ENCODE measurements at regions of chr1 and their contacts with region 1.

Region 1: GRCh38 chr1:222792744-222793143 is 22.1 kb upstream of the DISP1 start:
- DNase-seq: no peak
- ATAC-seq: peak in 2 of 4 donors; percentile 51 to 72
- H3K4me3 ChIP-seq: no peak overlapping the region
- H3K27ac ChIP-seq: no peak overlapping the region
- H3K4me1 ChIP-seq: no peaks in the 10 kb centered on the region
- H3K27me3 ChIP-seq: peaks cover 0 to 2% (median 0%) of the 10 kb centered on the region in 3 donors
- CTCF ChIP-seq: peak; percentile 58

Region 2: DNA sequence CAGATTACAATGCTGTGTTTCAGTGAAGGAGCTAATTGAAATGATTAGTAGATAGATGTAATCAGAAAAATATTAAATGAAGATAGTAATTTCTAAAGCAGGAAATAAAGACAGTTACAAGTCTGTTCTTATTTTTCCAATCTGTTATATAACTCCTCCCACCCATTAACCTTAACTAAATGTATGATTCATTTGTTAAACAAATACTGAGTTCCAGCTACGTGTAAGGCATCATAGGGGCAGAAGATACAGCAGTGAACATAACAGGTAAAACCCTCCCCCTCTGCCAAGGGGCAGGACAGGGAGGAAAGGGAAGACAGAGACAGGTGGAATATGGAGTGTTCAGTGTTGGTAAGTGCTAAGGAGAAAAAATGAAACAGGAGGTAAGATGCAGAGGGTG is 55.8 kb before region 1 on chr1 and contains the start of gene FAM177B:
- intact Hi-C with region 1: loop called in 1 of 2 experiments (anchors 1 kb)
- DNase-seq: no peak
- ATAC-seq: no peak
- H3K4me3 ChIP-seq: no peak within 1 kb of the TSS
- H3K27ac ChIP-seq: no peak within 1 kb of the TSS
- H3K4me1 ChIP-seq: no peaks in the 10 kb centered on the region
- H3K27me3 ChIP-seq: no peaks in the 10 kb centered on the region
- CTCF ChIP-seq: no peak
- total RNA-seq, gene FAM177B: not detected

Region 3: DNA sequence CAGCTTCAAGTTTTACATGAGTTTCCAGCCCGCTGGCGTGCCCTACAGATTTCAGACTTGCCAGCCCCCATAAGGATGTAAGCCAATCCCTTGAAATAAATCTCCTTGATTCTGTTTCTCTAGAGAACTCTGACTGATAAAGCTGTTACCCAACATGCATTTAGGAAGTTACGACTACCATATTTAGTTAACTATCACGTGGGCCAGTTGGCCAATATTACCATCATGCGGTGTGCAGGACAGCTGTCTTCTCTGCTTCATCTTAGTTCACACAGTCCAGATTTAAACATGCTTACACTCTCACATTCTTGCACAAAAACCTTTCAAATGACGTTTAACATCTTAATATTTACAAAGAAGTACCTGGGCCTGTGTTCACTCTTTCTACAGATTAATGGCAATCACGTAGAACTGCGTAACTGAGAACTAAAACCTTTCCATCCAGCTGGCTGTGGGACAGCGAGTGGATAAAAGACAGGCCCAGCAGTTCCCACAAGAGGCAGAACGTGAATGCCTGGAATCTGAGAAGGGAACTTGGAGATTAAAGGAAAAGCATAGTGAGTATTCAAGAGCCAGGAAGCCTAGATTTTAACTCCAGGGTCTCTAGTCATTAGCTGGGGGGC is 35.0 kb before region 1 on chr1:
- intact Hi-C with region 1: no loop called
- DNase-seq: no peak
- ATAC-seq: peak in 3 of 4 donors; percentile 42 to 77 (median 75)
- H3K4me3 ChIP-seq: no peak overlapping the region
- H3K27ac ChIP-seq: no peak overlapping the region
- H3K4me1 ChIP-seq: no peaks in the 10 kb centered on the region
- H3K27me3 ChIP-seq: no peaks in the 10 kb centered on the region
- CTCF ChIP-seq: no peak

Region 4: GRCh38 chr1:223062177-223062576 is 269.4 kb after region 1 on chr1:
- intact Hi-C with region 1: no loop called
- DNase-seq: no peak
- ATAC-seq: no peak
- H3K4me3 ChIP-seq: no peak overlapping the region
- H3K27ac ChIP-seq: no peak overlapping the region
- H3K4me1 ChIP-seq: no peaks in the 10 kb centered on the region
- H3K27me3 ChIP-seq: no peaks in the 10 kb centered on the region
- CTCF ChIP-seq: no peak

Region 5: DNA sequence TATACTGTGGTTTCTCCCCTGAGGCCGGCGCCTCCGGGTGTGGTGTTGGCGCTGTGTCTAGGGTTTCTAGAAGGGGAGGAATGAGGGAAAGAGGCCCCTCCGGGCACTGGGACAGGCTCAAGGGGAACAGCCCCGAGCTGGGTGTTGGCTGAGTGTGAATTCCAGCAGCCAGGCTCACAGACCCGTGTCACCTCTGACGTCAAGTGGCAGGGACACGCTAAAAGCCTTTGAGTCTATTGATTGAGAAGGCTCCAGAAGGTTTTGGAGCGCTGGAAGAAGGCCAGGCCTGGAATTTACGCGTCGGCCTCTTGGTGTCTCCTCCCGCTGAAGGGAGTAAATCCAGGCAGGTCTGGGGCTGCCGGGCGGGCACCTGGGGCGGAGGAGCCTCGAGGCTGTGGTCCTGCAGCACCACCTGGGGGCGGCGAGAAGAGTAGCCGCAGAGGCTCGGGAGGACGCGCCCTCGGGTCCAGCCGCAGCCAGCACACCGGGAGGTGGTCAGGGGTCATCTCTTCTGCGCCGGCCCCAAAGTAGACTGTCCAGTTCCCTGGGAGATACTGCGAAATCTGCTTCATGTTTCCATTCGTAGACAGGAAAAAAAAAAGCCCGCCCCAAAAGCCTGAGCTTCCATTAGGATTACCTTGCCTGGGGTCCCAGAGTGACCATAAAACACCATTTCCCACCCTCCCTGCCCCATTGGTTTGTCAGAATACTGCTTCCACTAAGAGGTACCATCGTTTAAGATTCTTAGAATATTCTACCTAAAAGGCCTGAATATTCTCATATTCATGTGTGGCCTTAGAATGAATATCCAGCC is 288.6 kb after region 1 on chr1:
- intact Hi-C with region 1: loop called (anchors 2 to 5 kb)
- DNase-seq: peak; percentile 79 to 91
- ATAC-seq: peak; percentile 96 to 99 (median 98)
- H3K4me3 ChIP-seq: peak overlapping the region; percentile 55
- H3K27ac ChIP-seq: peak overlapping the region; percentile 51
- H3K4me1 ChIP-seq: no peaks in the 10 kb centered on the region
- H3K27me3 ChIP-seq: no peaks in the 10 kb centered on the region
- CTCF ChIP-seq: peak; percentile 96

Region 6: DNA sequence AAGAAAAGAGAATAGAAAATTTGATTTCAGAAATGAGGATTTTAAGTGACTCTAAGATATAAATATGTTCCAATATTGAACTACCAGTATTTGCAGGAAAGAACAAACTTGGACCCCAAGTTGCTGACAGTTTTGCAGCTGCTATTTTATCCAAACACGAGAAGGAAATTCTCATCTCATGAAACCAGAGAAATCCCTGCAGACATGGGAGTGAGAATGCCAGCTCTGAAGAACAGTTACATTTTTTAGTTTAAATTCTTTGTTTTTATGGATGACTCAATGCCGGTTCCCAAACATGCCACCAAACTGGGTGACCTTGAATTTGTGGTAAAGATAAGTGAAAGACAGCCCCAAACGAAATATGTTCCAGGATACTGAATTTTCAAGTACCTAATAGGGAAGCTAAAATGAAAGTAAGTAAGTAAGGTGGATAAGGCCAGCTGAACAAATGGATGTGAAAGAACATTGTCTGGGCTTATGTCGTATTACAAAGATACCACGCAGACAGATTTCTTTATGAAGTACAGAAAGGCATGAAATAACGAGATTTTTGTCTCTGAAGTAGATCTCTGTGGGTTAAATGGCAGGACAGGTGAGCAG is 330.4 kb after region 1 on chr1:
- intact Hi-C with region 1: loop called (anchors 2 to 10 kb)
- DNase-seq: no peak
- ATAC-seq: no peak
- H3K4me3 ChIP-seq: no peak overlapping the region
- H3K27ac ChIP-seq: no peak overlapping the region
- H3K4me1 ChIP-seq: no peaks in the 10 kb centered on the region
- H3K27me3 ChIP-seq: no peaks in the 10 kb centered on the region
- CTCF ChIP-seq: no peak

Region 7: DNA sequence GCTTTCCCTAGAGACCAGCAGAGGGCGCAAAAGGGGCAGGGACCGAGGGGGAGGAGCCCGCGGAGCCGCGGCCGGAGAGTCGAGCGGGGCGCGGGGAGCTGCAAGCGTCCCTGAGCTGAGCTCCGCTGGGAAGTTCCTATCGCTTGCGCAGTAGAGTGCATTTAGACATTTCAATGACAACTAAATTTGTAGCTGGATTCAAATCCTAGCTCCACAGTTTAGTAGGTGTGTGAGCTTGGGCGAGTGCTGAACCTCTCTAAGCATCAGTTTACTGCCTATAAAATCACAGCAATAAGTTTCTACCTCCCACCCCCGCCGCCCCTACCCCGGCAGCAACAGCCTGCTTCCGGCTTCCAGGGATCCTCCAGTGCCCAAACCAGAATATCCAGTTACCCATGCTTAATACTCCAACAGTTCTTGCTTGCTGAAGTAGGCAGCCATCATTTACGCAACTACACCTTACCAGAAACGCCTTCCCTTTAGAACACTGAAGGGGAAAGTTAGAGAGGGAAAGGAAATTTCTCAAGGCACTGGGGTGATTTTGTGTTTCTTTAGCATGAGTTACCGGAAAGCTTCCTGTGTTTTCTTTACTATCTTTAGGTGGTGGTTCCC is 341.2 kb after region 1 on chr1:
- intact Hi-C with region 1: loop called in 1 of 2 experiments (anchors 10 kb)
- DNase-seq: peak; percentile 84 to 91
- ATAC-seq: peak; percentile 83 to 89 (median 84)
- H3K4me3 ChIP-seq: peak overlapping the region; percentile 57
- H3K27ac ChIP-seq: peak overlapping the region; percentile 64
- H3K4me1 ChIP-seq: peaks cover 34% of the 10 kb centered on the region
- H3K27me3 ChIP-seq: no peaks in the 10 kb centered on the region
- CTCF ChIP-seq: peak; percentile 89

Measured in psoas muscle (tissue), 8 donors.